Dorsolateral prefrontal cortex (tissue), 120 donors: ENCODE measurements at regions of chr2 and their contacts with region 1.

Region 1: DNA sequence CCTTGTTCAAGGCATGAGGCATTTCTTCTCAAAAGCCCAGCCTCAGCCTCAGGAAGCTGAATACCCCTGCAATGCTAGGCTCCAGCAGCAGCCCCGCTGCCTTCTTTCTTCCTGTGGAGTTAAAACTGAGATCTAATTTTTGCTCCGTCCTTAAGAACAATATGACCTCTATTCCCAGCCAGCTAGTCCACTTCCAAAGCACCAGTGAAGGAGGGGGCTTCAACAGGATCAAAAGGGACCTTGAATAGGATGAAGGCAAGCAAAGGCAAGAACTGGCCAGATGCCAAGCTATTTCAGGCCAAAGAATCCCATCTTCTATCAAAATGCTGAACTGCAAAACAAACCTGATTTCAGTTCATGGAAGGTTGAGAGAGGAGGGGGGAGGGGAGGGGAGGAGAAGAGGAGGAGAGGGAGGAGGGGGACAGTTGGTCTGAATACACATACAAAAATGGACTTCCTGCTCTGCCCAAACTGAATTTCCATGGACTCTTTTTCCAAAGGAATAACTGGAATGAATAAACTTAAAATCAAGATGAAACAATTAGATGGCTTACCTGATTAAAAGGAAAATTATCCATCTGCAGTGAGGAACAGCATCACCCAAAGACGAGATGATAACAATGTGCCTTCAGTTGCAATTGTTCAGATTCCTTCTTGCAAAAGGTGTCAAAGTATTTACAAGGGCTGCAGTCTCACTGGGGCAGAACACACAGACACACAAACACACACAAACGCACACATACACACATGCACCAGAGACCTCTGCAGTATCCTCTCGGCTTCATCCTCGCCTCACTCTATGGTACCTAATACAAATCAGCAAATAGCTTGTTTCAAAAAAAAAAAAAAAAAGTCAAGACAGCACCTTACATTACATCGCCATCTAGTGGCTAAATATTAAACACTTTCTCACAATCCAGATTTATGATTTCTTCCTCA is at the start of gene SCN1A:
- DNase-seq: peak in 1 of 10 donors; percentile 21
- H3K4me3 ChIP-seq: peak within 1 kb of the TSS; percentile 8 to 70 (median 50)
- H3K27ac ChIP-seq: peak within 1 kb of the TSS in 46 of 59 donors; percentile 1 to 82 (median 44)
- H3K27me3 ChIP-seq: peaks cover 0 to 2% (median 0%) of the 10 kb centered on the region in 45 donors
- CTCF ChIP-seq: peak; percentile 58 to 90 (median 78)
- total RNA-seq, gene SCN1A: 37.7 to 222 (median 143) TPM

Region 2: DNA sequence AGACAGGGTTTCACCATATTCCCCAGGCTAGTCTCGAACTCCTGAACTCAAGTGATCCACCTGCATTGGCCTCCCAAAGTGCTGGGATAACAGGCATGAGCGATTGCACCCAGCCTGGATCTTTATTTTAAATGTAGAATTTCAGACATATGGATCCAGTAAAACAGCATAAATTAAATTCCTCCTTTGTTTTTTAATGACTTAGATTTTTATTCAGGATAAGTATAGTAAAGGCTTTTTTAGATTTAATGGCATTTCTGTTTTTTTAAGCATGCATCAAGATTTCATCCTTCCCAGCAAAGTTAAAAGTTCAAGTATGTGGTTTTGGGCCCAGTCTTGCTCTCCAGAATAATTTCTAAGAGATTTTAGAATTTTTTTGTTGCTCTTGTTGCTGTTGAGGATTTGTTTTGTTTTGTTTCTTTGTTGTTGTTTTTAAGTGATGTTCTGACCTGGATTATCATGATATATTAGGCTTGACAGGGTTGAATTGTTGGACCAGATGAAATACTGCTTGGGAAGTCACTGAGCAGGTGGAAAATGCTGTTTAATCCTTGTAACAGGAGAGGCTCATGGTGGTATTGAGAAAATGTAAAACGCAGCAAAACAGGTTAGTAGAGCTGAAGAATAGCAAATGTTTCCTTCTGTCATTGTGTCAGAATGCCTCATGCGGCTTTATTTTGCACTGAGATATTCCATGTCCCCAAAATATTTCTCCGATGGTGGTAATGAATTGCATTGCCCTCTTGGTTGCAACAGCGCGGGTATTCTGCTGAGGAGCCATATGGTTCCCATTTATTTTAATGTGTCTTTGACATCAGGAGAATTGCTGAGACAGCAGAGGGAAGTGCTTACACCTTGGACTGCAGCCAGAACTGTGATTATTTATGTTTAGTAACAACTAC is 481.3 kb before region 1 on chr2:
- intact Hi-C with region 1: no loop called
- DNase-seq: peak in 1 of 10 donors; percentile 32
- H3K4me3 ChIP-seq: no peak overlapping the region
- H3K27ac ChIP-seq: peak overlapping the region in 2 of 59 donors; percentile 4 to 18
- H3K27me3 ChIP-seq: no peaks in the 10 kb centered on the region
- CTCF ChIP-seq: no peak

Region 3: GRCh38 chr2:165953655-165954606 is 173.6 kb before region 1 on chr2 and contains the start of gene TTC21B:
- intact Hi-C with region 1: loop called (anchors 5 kb)
- DNase-seq: peak; percentile 86 to 98 (median 94)
- H3K4me3 ChIP-seq: peak within 1 kb of the TSS; percentile 66 to 98 (median 84)
- H3K27ac ChIP-seq: peak within 1 kb of the TSS in 58 of 59 donors; percentile 25 to 93 (median 84)
- H3K27me3 ChIP-seq: no peaks in the 10 kb centered on the region
- CTCF ChIP-seq: peak; percentile 72 to 99 (median 89)
- total RNA-seq, gene TTC21B: 28.3 to 65.2 (median 47.2) TPM

Region 4: GRCh38 chr2:166057370-166058164 is 69.9 kb before region 1 on chr2:
- intact Hi-C with region 1: loop called (anchors 2 to 5 kb)
- DNase-seq: no peak
- H3K4me3 ChIP-seq: no peak overlapping the region
- H3K27ac ChIP-seq: no peak overlapping the region
- H3K27me3 ChIP-seq: no peaks in the 10 kb centered on the region
- CTCF ChIP-seq: peak; percentile 51 to 80 (median 66)

Region 5: DNA sequence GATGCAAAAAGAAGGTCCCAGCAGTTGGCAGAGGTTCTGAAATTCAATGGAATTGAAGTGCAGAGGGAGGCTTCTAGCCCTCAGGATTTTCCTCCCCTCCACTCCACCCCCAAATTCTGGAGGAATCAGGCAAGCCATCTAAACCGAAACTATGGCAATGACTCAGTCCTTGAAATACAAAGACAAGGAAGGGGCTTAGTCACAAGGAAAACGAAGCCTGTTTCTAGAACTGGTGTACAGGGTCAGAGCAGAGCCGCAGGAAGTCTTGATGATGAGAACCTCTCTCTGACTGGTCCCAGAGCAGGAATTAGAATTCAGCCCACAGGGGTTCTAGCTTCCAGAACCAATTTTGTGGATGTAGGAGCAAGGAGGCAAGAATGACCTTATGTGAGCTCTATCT is 112.1 kb after region 1 on chr2:
- intact Hi-C with region 1: no loop called
- DNase-seq: no peak
- H3K4me3 ChIP-seq: no peak overlapping the region
- H3K27ac ChIP-seq: no peak overlapping the region
- H3K27me3 ChIP-seq: peaks cover 0 to 5% (median 0%) of the 10 kb centered on the region in 45 donors
- CTCF ChIP-seq: no peak